ENCODE measurements at regions of chrX and their contacts with region 1.

Region 1: DNA sequence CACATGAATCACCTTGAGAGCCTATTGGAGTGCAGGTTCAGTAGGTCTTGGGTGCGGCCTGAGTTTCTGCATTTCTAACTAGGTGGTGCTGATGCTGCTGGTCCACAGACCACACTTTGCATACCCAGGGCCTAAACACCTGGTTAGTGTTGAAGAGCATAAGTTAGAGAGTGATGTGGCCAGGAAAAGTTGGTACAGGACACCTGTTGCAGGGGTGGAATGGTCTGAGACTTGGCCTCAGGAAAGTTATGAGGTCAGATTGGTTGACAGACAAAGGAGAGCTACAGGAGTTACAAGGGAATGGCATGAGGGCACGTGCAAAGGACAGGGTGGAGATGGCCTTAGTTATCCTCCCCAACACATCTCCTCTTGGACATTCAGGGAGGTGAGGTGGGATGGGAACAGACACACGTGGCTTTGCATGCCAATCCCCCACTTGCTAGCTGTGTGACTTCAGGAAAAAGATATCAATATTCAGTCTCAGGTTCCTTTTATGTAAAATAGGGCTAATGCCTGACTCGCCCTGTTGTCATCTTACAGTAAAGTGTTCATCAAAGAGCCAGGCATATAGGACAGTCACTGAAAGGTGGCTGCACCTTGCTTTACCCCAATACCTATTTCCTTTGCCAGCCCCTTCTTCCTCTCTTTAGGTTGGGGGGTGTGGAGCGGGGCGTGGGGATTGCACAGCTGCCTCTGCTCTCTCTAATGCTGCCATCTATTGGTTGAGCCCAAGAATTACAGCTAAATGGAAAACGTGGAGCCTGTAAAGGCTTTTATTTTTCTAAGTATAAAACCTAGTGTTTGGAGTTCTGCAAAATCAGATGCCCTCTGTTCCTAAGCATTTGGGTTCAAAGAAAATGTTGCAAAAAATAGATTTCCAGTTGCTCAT is 47.5 kb downstream of the ATG4A start:
- DNase-seq: no peak
- H3K4me3 Mint-ChIP-seq: no peak overlapping the region
- H3K27ac Mint-ChIP-seq: no peak overlapping the region
- H3K4me1 Mint-ChIP-seq: no peaks in the 10 kb centered on the region
- H3K27me3 Mint-ChIP-seq: peaks cover 39% of the 10 kb centered on the region
- CTCF ChIP-seq: peak; percentile 44

Region 2: DNA sequence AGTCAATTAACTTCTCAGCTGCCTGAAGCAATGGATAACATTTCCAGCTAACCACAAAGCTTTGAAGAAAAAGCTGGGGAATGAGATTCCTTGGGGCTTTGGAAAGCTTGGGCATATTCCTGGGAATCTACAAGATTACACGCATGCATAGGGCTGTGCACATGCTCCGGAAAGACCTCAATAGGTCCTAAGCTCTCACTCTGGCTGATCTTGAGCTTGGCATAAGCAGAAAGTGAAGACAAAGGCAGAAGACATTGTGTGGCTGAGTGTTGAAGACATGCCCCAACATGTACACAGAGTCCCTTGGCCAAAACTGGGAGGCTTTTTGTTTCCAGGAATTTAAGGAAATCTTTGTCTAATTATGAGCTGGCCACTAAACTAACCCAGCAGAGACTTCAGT is 16.3 kb before region 1 on chrX:
- CTCF ChIA-PET with region 1: interaction called, 9 read pairs
- POLR2A ChIA-PET with region 1: interaction called, 10 read pairs
- intact Hi-C with region 1: no loop called
- DNase-seq: peak; percentile 70
- H3K4me3 Mint-ChIP-seq: no peak overlapping the region
- H3K27ac Mint-ChIP-seq: peak overlapping the region; percentile 92
- H3K4me1 Mint-ChIP-seq: peaks cover 17% of the 10 kb centered on the region
- H3K27me3 Mint-ChIP-seq: peaks cover 90% of the 10 kb centered on the region
- CTCF ChIP-seq: no peak

Measured in MCF 10A (cell line).